ENCODE measurements at regions of chr9 and their contacts with region 1.

Region 1: DNA sequence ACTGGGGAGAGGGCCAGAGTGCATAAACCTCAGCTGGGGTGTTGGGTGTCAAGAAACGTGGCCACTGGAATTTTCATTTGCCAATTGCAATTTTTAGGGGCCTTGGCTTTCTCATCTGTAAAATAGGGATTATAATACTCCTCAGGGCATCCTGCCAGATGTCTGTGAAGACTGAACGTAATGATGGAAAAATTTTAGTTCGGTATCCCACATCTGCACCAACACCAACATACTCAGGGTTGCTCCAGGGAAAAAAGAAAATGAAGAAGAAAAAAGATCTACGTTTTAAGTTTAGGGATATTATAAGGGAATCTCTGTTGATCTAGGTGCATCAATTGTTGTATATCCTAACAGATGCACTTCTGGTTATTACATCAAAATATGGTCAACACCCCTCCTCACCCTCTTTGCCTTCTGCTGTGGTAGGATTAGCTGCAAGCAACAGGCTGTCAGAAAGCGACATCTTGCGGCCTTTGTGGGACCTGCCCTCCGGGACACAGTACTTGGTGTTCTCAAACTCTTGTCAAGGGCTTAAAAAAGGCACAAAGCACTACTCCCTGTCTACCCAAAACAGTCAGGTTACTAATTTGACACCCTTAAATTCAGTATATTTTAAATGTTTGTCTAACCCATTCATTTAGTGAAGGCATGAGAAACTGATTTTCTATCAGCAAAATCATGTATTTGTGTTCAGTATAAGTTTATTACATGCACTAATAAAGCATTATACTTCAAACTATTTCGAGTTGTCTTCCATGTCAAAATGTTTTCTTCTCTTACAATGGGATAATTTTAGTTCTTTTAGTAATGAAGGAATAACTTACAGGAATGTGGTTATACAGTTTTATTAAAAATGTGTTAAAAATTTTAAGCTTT is 8.3 kb upstream of the TBC1D2 start:
- DNase-seq: peak; percentile 72 to 93 (median 87)

Region 2: DNA sequence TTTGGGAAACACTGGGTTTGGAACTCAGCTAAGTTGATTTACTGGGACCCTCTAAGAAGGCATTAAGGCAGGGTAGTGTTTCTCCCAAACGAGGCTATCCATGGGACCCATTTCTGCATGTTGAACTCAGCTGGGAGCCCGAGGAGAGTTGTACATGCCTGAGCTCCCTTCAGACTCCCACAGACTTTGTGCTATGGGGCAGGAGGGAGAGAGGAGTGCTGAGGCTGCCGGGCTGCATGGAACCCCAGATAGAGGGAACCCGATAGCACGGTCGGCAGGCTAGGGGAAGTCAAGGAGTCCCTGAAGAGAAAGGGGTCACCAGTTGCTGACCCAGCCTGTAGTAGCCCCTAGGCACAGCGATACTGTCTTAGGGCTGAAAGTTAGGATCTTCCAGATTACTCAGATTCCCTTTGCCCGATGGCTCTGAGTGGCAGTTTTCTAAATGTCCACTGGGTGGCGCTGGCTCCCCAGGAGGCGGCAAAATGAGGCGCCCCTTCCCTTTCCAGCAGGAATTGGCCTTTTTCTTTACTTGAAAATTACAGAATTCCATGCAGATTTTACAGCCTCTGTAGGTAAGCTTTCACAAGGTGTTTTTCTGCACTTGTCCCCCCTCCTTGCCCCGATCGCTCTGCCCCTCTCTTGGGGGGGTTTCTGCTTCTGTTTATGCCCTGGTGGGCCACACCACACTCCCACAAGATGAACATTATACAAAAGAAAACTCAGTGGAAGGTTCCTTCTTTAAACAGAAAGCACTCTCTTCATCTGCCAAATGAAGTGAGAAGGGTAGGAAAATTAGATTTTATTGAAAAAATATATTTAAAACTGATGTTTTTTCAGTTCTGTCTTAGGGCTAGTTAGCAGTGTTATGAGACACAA is 189.4 kb before region 1 on chr9:
- intact Hi-C with region 1: loop called (anchors 5 kb)
- DNase-seq: peak in 41 of 42 donors; percentile 37 to 89 (median 72)

Region 3: GRCh38 chr9:98207606-98208005 is 56.1 kb before region 1 on chr9:
- intact Hi-C with region 1: loop called (anchors 5 kb)
- DNase-seq: no peak

Region 4: DNA sequence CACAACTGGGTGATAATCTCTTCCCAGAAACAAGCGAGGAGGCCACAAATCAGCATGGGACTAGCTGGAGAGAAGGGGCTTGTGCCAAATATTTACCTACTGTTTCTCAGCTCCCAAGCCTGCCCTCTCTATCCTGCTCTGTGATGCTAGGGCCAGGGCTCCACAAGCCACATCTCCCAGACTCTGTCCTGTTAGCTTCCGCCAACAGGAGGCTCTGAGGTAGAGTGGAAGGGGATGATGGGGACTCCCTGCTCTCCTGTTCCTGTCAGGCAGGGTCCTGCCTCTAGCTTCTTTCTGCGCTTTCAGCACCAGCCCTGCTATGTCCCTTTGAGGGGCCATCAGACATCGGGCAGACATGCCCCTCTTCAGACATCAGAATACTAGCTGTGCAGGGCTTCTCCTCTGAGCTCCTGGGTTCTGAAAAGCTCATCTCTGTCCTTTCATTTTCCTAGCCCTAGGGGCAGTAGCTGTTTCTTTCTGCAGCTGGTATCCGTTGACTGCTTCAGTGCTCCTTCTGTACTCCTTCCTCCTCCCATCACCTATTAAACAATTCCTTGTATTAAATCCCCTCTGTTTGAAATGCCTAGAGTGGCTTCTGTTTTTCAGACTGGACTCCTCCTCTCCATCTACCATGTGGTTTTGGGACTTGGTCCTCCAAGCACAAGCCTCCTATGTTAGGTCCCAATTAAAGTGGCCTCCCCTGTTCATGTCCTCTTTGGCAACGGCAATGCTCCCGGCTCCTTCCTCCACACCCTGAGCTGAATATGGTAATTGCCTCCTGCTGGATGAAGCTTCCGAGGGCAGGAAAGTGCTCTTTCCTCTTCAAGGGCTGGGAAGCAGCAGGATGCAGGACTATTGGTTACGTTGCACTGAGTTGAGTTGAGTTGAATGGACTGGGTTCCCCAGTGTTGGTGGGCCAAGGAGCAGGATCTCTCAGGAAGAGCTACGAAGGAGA is 152.9 kb after region 1 on chr9:
- intact Hi-C with region 1: no loop called
- DNase-seq: peak in 1 of 42 donors; percentile 19